PC-9 (cell line): ENCODE measurements at regions of chr7 and their contacts with region 1.

Region 1: GRCh38 chr7:27774717-27775328 is 34.9 kb downstream of the TAX1BP1 start:
- DNase-seq: no peak
- H3K4me3 ChIP-seq: no peak overlapping the region
- H3K27ac ChIP-seq: no peak overlapping the region
- H3K4me1 ChIP-seq: peaks cover 23% of the 10 kb centered on the region
- H3K27me3 ChIP-seq: no peaks in the 10 kb centered on the region
- CTCF ChIP-seq: peak; percentile 88

Region 2: DNA sequence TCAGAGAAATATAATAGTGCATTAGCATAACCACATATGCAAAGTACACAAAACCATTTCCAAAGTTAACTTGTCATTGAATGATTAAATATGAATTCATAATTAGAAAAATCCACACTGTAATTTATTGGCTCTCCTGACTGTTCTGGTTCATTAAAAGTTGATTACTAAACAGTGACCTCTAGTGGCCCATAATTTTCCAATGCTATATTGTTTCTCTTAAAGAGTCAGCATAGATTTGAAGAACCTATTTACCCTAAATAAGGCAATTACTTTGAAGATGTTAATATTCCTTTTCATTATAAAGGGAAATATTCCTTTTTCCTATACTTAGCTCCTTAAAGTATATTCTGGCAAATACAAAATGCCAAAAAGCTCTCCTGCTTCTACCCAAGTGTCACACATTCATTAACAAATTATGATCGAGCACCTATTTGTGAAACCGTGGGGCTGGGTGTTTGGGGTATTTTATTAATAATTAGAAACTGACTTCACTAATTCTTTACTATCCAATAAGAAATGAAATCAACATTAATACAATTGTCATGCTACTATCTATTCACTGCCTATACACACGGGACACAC is 198.4 kb before region 1 on chr7:
- CTCF ChIA-PET with region 1: no interaction called
- POLR2A ChIA-PET with region 1: no interaction called
- intact Hi-C with region 1: loop called (anchors 5 kb)
- DNase-seq: no peak
- H3K4me3 ChIP-seq: no peak overlapping the region
- H3K27ac ChIP-seq: no peak overlapping the region
- H3K4me1 ChIP-seq: no peaks in the 10 kb centered on the region
- H3K27me3 ChIP-seq: no peaks in the 10 kb centered on the region
- CTCF ChIP-seq: peak; percentile 91

Region 3: GRCh38 chr7:27640914-27641580 is 133.8 kb before region 1 on chr7:
- CTCF ChIA-PET with region 1: interaction called, 6 read pairs
- POLR2A ChIA-PET with region 1: interaction called, 6 read pairs
- intact Hi-C with region 1: loop called (anchors 2 kb)
- DNase-seq: peak; percentile 87 to 96
- H3K4me3 ChIP-seq: peak overlapping the region; percentile 8; the same call in 1 of the 2 replicates
- H3K27ac ChIP-seq: peak overlapping the region; percentile 90
- H3K4me1 ChIP-seq: peaks cover 37% of the 10 kb centered on the region
- H3K27me3 ChIP-seq: no peaks in the 10 kb centered on the region
- CTCF ChIP-seq: peak; percentile 40; the same call in 1 of the 2 replicates

Region 4: DNA sequence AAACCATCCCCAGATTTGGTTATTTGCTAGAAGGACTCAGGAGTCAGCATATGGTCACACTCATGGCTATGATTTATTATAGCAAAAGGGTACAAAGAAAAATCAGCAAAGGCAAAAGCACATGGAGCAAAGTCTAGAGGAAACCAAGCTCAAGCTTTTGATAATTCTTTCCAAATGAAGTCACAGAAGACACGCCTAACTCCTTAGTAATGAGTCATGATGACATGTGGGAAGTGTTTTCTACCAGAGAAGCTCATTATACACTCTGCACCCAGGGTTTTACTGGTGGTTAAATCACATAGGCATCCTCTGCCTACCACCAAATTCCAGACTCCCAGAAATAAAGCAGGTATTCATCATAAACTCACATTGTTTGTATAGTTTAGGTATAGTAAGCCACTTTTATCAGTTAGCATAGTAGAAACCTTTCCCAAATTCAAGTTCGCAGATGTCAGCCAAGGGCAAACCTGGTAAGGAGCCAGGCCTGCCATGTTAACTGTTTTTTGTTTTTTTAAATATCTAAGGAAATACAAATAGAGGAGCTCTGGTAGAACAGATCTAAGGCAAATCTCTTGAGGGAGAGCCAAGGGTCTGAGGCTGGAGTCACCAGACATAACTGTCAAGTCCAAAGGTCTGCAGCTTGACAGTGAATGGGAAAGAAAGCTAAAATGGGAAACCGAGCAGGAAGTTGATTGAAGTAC is 96.8 kb before region 1 on chr7:
- CTCF ChIA-PET with region 1: no interaction called
- POLR2A ChIA-PET with region 1: interaction called, 7 read pairs
- intact Hi-C with region 1: loop called (anchors 5 kb)
- DNase-seq: peak; percentile 51 to 98
- H3K4me3 ChIP-seq: peak overlapping the region; percentile 11; the same call in 1 of the 2 replicates
- H3K27ac ChIP-seq: peak overlapping the region; percentile 98
- H3K4me1 ChIP-seq: peaks cover 33% of the 10 kb centered on the region
- H3K27me3 ChIP-seq: no peaks in the 10 kb centered on the region
- CTCF ChIP-seq: no peak

Region 5: GRCh38 chr7:27745064-27745583 is 29.7 kb before region 1 on chr7:
- CTCF ChIA-PET with region 1: interaction called, 5 read pairs
- POLR2A ChIA-PET with region 1: interaction called, 5 read pairs
- intact Hi-C with region 1: loop called (anchors 1 kb)
- DNase-seq: peak; percentile 47 to 82
- H3K4me3 ChIP-seq: peak overlapping the region; percentile 25
- H3K27ac ChIP-seq: peak overlapping the region; percentile 65
- H3K4me1 ChIP-seq: peaks cover 42% of the 10 kb centered on the region
- H3K27me3 ChIP-seq: no peaks in the 10 kb centered on the region
- CTCF ChIP-seq: peak; percentile 81